PC-3 (cell line): ENCODE measurements at regions of chr2 and their contacts with region 1.

Region 1: DNA sequence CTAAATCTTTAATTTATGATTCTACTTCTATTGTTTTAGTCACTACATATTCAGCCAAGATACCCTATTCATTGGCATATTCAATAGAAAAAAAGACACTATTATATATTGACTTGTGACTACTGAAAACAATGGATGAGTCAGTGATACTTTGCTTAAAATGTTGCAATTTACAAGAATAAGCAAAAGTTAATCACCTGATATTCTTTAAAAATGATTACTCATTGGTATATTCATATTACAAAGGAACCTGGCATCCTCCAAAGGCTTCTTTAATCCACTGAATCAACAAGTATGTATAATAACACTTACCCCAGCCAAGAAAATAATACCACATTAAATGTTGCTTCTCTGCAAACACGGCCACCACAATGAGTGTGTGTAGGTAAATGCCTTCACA is 87.8 kb downstream of the CALCRL start:
- DNase-seq: peak; percentile 65
- ATAC-seq: peak; percentile 94
- H3K4me3 ChIP-seq: no peak overlapping the region
- H3K27ac ChIP-seq: peak overlapping the region; percentile 44
- H3K4me1 ChIP-seq: peaks cover 13% of the 10 kb centered on the region
- H3K27me3 ChIP-seq: no peaks in the 10 kb centered on the region
- CTCF ChIP-seq: no peak

Region 2: GRCh38 chr2:186887107-186888090 is 472.9 kb before region 1 on chr2:
- CTCF ChIA-PET with region 1: no interaction called
- POLR2A ChIA-PET with region 1: no interaction called
- intact Hi-C with region 1: loop called (anchors 10 kb)
- DNase-seq: no peak
- ATAC-seq: no peak
- H3K4me3 ChIP-seq: no peak overlapping the region
- H3K27ac ChIP-seq: no peak overlapping the region
- H3K4me1 ChIP-seq: peaks cover 28% of the 10 kb centered on the region
- H3K27me3 ChIP-seq: no peaks in the 10 kb centered on the region
- CTCF ChIP-seq: no peak

Region 3: DNA sequence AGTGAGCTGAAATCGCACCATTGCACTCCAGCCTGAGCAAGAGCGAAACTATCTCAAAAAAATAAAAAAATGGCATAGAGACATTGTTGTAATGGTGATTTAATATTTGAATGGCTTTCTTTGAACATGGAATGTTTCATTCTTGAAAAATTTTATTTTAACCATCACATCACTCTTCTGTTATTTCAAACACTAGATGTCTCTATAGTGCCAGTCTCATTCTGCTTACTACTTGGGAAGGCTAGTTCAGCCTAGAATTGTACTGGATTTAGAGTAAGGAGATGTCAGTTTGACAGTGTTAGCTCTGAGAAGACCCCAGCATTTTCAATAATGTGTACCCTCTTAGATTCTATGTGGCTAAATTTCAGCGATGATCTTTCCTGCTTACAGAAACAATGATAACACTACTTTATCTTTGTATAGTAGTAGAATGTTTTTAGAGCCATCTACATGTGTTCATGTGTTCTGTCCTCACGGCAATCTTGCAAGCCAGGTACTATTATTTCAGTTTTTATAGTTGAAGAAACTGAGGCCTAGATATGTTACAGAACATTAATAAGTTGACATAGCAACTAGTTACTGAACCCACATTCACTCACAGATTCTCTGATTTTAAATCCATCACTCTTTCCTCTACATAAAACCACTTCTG is 368.4 kb before region 1 on chr2:
- CTCF ChIA-PET with region 1: no interaction called
- POLR2A ChIA-PET with region 1: no interaction called
- intact Hi-C with region 1: no loop called
- DNase-seq: peak; percentile 13
- ATAC-seq: no peak
- H3K4me3 ChIP-seq: no peak overlapping the region
- H3K27ac ChIP-seq: no peak overlapping the region
- H3K4me1 ChIP-seq: peaks cover 5% of the 10 kb centered on the region; the same call in 1 of the 2 replicates
- H3K27me3 ChIP-seq: no peaks in the 10 kb centered on the region
- CTCF ChIP-seq: peak; percentile 43

Region 4: GRCh38 chr2:187299122-187299906 is 61.0 kb before region 1 on chr2:
- CTCF ChIA-PET with region 1: no interaction called
- POLR2A ChIA-PET with region 1: no interaction called
- intact Hi-C with region 1: loop called (anchors 5 kb)
- DNase-seq: peak; percentile 27
- ATAC-seq: peak; percentile 27; the same call in 1 of the 2 replicates
- H3K4me3 ChIP-seq: no peak overlapping the region
- H3K27ac ChIP-seq: no peak overlapping the region
- H3K4me1 ChIP-seq: no peaks in the 10 kb centered on the region
- H3K27me3 ChIP-seq: no peaks in the 10 kb centered on the region
- CTCF ChIP-seq: peak; percentile 59

Region 5: GRCh38 chr2:187424146-187424545 is 63.9 kb after region 1 on chr2:
- CTCF ChIA-PET with region 1: no interaction called
- POLR2A ChIA-PET with region 1: no interaction called
- intact Hi-C with region 1: loop called (anchors 2 kb)
- DNase-seq: peak; percentile 55
- ATAC-seq: peak; percentile 98
- H3K4me3 ChIP-seq: no peak overlapping the region
- H3K27ac ChIP-seq: 0 out of 2 replicates have a peak overlapping the region, but pooled peaks have one; percentile 16
- H3K4me1 ChIP-seq: peaks cover 9% of the 10 kb centered on the region
- H3K27me3 ChIP-seq: no peaks in the 10 kb centered on the region
- CTCF ChIP-seq: no peak